Right cardiac atrium (tissue), 5 donors: ENCODE measurements at regions of chr1 and their contacts with region 1.

Region 1: DNA sequence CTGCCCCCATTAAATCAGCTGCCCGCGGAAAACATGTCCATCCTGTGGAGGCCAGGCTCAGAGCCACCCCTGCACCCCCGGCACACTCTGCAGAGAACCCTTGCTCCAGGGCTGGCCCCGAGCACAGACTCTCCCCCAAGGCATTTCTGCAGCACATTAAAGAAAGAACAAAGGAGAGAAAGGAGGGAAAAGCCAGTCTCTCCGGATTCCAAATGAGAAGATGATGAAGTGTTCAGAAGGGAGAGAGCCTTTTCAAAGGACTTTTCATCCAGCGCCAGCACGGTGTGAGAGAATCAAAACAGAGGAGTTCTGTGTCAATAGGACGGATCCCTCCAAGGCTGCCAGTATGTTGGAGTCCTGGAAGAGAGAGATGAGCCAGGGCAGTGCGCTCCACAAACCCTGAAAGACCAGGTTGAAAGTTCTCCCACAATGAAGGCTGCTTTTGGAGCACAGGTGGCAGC is 498.3 kb downstream of the NPHP4 start:
- DNase-seq: no peak
- ATAC-seq: no peak
- H3K4me3 ChIP-seq: no peak overlapping the region
- H3K27ac ChIP-seq: no peak overlapping the region
- H3K4me1 ChIP-seq: peaks cover 2% of the 10 kb centered on the region
- H3K27me3 ChIP-seq: no peaks in the 10 kb centered on the region

Region 2: GRCh38 chr1:4700801-4701200 is 793.1 kb before region 1 on chr1:
- intact Hi-C with region 1: no loop called
- DNase-seq: peak in 1 of 3 donors; percentile 16
- ATAC-seq: peak in 1 of 2 donors; percentile 10
- H3K4me3 ChIP-seq: no peak overlapping the region
- H3K27ac ChIP-seq: no peak overlapping the region
- H3K4me1 ChIP-seq: no peaks in the 10 kb centered on the region
- H3K27me3 ChIP-seq: no peaks in the 10 kb centered on the region

Region 3: GRCh38 chr1:5430911-5431697 is 62.8 kb before region 1 on chr1:
- intact Hi-C with region 1: loop called in 1 of 4 experiments (anchors 10 kb)
- DNase-seq: no peak
- ATAC-seq: no peak
- H3K4me3 ChIP-seq: no peak overlapping the region
- H3K27ac ChIP-seq: no peak overlapping the region
- H3K4me1 ChIP-seq: no peaks in the 10 kb centered on the region
- H3K27me3 ChIP-seq: no peaks in the 10 kb centered on the region

Region 4: DNA sequence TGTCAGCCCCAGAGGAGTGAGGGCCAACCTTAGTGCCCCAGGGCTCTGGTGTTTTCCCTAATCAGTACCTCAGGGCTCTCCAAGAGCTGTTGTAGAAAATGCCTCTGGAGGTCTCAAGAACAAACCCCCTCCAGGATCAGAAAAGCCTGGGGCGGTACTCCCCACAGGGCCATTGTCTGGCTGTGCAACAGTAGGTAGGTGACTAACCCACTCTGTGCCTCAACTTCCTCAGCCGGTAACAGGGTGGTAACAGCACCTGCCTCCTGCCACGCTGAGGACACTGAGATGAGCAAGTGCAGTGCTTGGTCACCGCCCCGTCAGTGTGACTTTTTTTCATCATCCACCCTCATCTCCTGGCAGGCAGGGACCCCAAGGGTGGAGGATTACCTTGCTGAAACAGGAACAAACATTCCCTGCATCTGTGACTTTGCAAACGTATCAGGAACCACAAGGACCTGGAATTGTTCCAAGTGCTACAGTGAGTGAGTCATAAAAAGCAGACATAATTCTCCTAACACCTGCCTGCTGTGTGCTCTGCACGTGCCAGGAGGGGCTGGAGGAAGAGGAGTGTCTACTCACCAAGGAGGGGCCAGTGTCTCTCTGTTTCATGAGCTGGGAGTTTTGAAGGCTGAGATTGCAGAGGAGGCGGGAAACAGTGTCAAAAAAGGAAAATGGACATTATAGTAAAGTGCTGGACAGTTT is 57.5 kb after region 1 on chr1:
- intact Hi-C with region 1: no loop called
- DNase-seq: no peak
- ATAC-seq: no peak
- H3K4me3 ChIP-seq: no peak overlapping the region
- H3K27ac ChIP-seq: no peak overlapping the region
- H3K4me1 ChIP-seq: no peaks in the 10 kb centered on the region
- H3K27me3 ChIP-seq: no peaks in the 10 kb centered on the region